HepG2 (cell line): ENCODE measurements at regions of chr4 and their contacts with region 1.

Region 1: DNA sequence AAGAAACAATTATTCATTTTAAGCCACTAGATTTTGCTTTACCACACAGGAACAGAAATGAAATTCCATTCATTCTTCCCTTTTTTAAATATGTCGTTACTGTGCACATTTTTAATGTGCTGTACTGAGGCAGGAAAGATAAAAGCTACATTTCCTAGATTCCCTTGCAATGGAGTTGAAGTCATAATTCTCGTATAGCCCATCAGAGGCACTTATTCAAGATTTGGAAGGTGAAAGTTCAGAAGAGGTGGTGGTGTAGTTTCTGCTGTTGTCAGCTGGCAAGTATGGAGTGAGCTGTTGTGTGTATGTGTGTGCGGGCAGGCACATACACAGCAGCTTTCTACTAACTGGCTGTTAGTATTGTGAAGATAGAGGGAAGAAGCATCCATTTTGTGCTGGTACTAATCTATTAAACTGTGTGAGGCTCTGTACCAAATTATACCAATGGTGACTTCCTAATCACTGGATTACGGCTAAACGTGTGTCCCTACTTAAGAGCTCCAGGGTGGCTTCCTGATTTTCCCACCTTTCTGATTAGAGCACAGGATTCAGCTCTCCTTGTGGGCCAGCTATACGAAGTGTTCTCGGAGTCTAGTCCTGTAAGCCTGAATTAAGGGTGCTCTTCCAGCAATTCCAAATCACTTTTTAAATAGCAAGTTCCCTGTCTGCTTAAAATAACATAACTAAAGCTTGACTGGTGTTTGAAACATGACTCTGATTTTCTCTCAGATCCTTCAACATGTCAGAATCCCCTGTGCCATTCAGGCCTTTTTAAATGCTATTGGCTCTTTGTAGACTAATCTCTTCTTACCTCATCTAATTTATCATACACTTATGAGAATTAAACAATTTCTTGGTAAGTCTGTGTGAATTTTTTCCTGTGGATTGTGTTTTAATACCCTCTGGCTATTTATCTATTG is 43.8 kb downstream of the PDS5A start:
- DNase-seq: no peak
- ATAC-seq: no peak
- H3K4me3 ChIP-seq: no peak overlapping the region
- H3K27ac ChIP-seq: no peak overlapping the region
- H3K4me1 ChIP-seq: no peaks in the 10 kb centered on the region
- H3K27me3 ChIP-seq: no peaks in the 10 kb centered on the region
- CTCF ChIP-seq: no peak
- EP300 ChIP-seq: no peak
- POLR2A ChIP-seq: no peak
- RAD21 ChIP-seq: no peak

Region 2: GRCh38 chr4:39883646-39884045 is 50.3 kb before region 1 on chr4:
- CTCF ChIA-PET with region 1: no interaction called
- POLR2A ChIA-PET with region 1: no interaction called
- in situ Hi-C with region 1: no loop called
- intact Hi-C with region 1: loop called (anchors 1 kb)
- DNase-seq: no peak
- ATAC-seq: no peak; the same call in 2 of the 3 replicates
- H3K4me3 ChIP-seq: no peak overlapping the region
- H3K27ac ChIP-seq: no peak overlapping the region
- H3K4me1 ChIP-seq: no peaks in the 10 kb centered on the region
- H3K27me3 ChIP-seq: no peaks in the 10 kb centered on the region; a peak in 1 of 5 replicates
- CTCF ChIP-seq: no peak
- EP300 ChIP-seq: no peak
- POLR2A ChIP-seq: no peak
- RAD21 ChIP-seq: no peak